ENCODE measurements at regions of chr7 and their contacts with region 1.

Region 1: DNA sequence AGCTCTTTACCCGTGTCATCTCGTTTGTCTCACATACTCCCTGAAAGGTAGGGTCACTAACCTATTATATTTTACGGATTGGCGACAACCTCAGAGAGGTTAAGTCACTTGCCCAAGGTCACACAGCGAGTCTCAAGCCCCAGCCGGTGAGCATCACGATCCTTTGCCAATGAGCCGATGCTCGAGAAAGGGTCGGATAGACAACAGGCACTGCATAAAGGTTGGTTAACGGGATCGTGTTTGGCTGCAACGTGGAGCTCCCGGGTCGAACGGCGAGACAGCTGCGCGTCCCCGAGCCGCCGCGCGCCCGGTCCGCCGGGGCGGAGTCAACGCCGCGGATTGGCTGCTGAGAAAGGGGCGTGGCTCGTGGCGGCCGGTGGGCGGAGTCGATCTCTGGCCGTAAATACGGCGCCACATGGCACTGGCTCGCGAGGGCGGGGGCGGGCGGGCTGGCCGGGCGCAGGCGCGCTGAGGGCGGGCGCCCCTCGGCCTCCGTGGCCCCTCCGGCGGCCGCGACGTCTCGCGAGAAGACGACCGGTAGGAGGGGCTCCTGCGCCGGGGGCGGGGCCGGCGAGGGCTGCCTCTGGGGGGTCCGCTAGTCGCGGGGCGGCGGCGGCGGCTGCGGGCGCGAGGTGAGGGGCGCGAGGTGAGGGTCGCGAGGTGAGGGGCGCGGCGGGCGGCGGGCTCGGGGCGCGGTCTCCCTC is at the start of gene CHST12:
- DNase-seq: peak; percentile 91 to 96 (median 93)
- ATAC-seq: peak; percentile 94
- H3K4me3 ChIP-seq: peak within 1 kb of the TSS; percentile 81
- H3K4me3 Mint-ChIP-seq: peak within 1 kb of the TSS; percentile 80 to 94 (median 89)
- H3K27ac ChIP-seq: peak within 1 kb of the TSS; percentile 70
- H3K27ac Mint-ChIP-seq: peak within 1 kb of the TSS; percentile 60 to 96 (median 84)
- H3K4me1 ChIP-seq: peaks cover 23 to 28% of the 10 kb centered on the region in 2 donors
- H3K4me1 Mint-ChIP-seq: peaks cover 38 to 54% (median 49%) of the 10 kb centered on the region in 7 donors
- H3K27me3 ChIP-seq: no peaks in the 10 kb centered on the region
- H3K27me3 Mint-ChIP-seq: peaks cover 0 to 2% (median 0%) of the 10 kb centered on the region in 5 donors
- total RNA-seq, gene CHST12: 13.3 to 41.6 (median 24.3) TPM

Region 2: GRCh38 chr7:1418505-1419309 is 984.5 kb before region 1 on chr7:
- CTCF ChIA-PET with region 1: no interaction called
- POLR2A ChIA-PET with region 1: no interaction called
- intact Hi-C with region 1: loop called in 1 of 2 experiments (anchors 5 kb)
- DNase-seq: no peak
- ATAC-seq: no peak
- H3K4me3 ChIP-seq: no peak overlapping the region
- H3K4me3 Mint-ChIP-seq: peak overlapping the region in 1 of 10 donors; percentile 37
- H3K27ac ChIP-seq: no peak overlapping the region
- H3K27ac Mint-ChIP-seq: no peak overlapping the region
- H3K4me1 ChIP-seq: peaks cover 5 to 7% of the 10 kb centered on the region in 2 donors
- H3K4me1 Mint-ChIP-seq: peaks cover 12 to 26% (median 18%) of the 10 kb centered on the region in 7 donors
- H3K27me3 ChIP-seq: no peaks in the 10 kb centered on the region
- H3K27me3 Mint-ChIP-seq: peaks cover 0 to 13% (median 12%) of the 10 kb centered on the region in 5 donors

Region 3: DNA sequence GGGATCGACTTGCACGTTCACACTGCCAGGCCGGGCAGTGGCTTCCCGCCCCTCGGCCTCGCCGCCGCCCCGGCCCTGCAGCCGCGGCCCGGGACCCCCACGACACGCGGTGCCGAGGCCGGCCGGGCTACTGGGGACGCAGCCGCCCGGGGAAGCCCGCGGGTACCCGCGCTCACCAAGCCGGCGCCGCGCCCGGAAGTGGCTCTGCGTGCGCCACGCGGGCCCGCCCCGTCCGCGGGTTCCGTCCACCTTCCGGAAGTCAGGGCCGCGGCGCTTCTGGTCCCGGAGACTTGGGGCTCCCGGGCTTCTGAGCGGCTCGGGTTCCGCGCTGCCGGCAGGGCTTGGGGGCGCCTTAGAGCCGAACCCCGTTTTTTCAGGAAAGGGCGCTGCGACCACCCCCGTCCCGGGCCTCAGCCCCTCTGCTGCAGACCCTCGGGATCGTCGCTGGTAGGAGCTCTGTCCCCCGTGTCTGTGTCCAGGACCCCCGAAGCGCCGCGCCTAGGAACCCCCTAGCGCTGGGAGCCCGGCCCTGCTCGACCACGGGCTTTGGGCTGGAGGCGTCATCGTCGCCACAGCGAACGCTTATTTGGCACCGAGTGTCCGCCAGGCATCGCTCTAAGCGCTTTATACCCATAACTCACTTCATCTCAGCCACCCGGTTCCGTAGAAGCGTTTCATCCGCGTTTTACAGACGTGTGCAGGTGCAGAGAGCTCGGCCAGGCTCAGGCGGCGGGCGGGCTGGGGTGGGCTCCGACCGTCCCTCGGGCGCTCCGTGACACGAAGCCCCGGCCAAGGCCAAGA is 833.1 kb before region 1 on chr7 and contains the start of gene PSMG3:
- CTCF ChIA-PET with region 1: no interaction called
- POLR2A ChIA-PET with region 1: interaction called, 3 read pairs
- intact Hi-C with region 1: loop called (anchors 1 to 5 kb)
- DNase-seq: peak; percentile 72 to 91 (median 84)
- ATAC-seq: peak; percentile 94
- H3K4me3 ChIP-seq: peak within 1 kb of the TSS; percentile 90
- H3K4me3 Mint-ChIP-seq: peak within 1 kb of the TSS; percentile 77 to 91 (median 86)
- H3K27ac ChIP-seq: peak within 1 kb of the TSS; percentile 95
- H3K27ac Mint-ChIP-seq: peak within 1 kb of the TSS; percentile 81 to 93 (median 88)
- H3K4me1 ChIP-seq: peaks cover 3 to 16% of the 10 kb centered on the region in 2 donors
- H3K4me1 Mint-ChIP-seq: peaks cover 14 to 36% (median 26%) of the 10 kb centered on the region in 7 donors
- H3K27me3 ChIP-seq: no peaks in the 10 kb centered on the region
- H3K27me3 Mint-ChIP-seq: no peaks in the 10 kb centered on the region
- total RNA-seq, gene PSMG3: 12.1 to 31.8 (median 23.2) TPM

Region 4: GRCh38 chr7:2232766-2233520 is 170.2 kb before region 1 on chr7 and contains the start of gene MAD1L1:
- CTCF ChIA-PET with region 1: no interaction called
- POLR2A ChIA-PET with region 1: no interaction called
- intact Hi-C with region 1: loop called (anchors 1 to 5 kb)
- DNase-seq: peak; percentile 75 to 90 (median 88)
- ATAC-seq: peak; percentile 90
- H3K4me3 ChIP-seq: peak within 1 kb of the TSS; percentile 99
- H3K4me3 Mint-ChIP-seq: peak within 1 kb of the TSS; percentile 88 to 98 (median 95)
- H3K27ac ChIP-seq: peak within 1 kb of the TSS; percentile 80
- H3K27ac Mint-ChIP-seq: peak within 1 kb of the TSS; percentile 66 to 91 (median 86)
- H3K4me1 ChIP-seq: peaks cover 13 to 27% of the 10 kb centered on the region in 2 donors
- H3K4me1 Mint-ChIP-seq: peaks cover 16 to 58% (median 31%) of the 10 kb centered on the region in 7 donors
- H3K27me3 ChIP-seq: no peaks in the 10 kb centered on the region
- H3K27me3 Mint-ChIP-seq: no peaks in the 10 kb centered on the region
- total RNA-seq, gene MAD1L1: 112 to 141 (median 125) TPM

Region 5: DNA sequence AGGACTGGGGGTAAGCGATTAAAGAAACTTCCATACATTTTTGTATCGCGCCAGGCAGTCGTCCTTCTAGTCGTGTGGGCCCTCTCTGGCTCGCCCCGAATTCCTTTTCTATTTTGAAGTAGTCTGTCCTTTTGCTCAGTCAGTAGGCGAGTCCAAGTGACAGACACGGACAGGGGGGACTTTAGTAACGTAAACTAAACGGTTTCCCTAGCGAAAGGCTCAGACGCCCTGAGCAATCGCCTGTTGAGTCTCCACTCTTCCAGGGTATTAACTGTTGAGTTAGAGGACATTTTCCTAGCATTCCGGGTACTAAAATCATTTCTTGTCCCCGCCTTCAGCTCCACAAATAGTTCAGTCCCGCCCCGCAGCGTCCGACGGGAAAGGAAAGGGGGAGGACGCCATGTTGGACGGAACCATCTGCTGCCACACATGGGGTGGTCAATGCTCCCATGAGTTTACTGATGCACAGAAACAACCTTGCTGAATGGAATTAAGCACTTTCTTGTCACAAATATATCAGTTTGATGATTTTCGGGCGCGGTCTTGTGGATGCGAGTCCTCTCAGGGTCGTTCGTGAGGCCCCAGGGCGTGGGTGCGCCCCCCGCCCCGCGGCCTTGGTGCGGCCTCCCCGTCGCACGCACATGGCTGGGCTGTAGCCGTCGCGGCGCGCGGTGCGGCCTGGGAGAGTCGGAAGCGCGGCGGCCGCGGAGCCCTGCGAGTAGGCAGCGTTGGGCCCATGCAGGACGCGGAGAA is 48.8 kb before region 1 on chr7 and contains the start of gene EIF3B:
- CTCF ChIA-PET with region 1: no interaction called
- POLR2A ChIA-PET with region 1: interaction called, 14 read pairs
- intact Hi-C with region 1: loop called (anchors 1 kb)
- DNase-seq: peak; percentile 87 to 97 (median 94)
- ATAC-seq: peak; percentile 90
- H3K4me3 ChIP-seq: peak within 1 kb of the TSS; percentile 89
- H3K4me3 Mint-ChIP-seq: peak within 1 kb of the TSS; percentile 90 to 100 (median 94)
- H3K27ac ChIP-seq: peak within 1 kb of the TSS; percentile 97
- H3K27ac Mint-ChIP-seq: peak within 1 kb of the TSS; percentile 98 to 100 (median 100)
- H3K4me1 ChIP-seq: peaks cover 25 to 38% of the 10 kb centered on the region in 2 donors
- H3K4me1 Mint-ChIP-seq: peaks cover 16 to 48% (median 31%) of the 10 kb centered on the region in 7 donors
- H3K27me3 ChIP-seq: no peaks in the 10 kb centered on the region
- H3K27me3 Mint-ChIP-seq: peaks cover 0 to 3% (median 0%) of the 10 kb centered on the region in 5 donors
- total RNA-seq, gene EIF3B: 127 to 189 (median 158) TPM

Region 6: GRCh38 chr7:2487586-2488271 is 84.6 kb after region 1 on chr7:
- CTCF ChIA-PET with region 1: no interaction called
- POLR2A ChIA-PET with region 1: no interaction called
- intact Hi-C with region 1: no loop called
- DNase-seq: no peak
- ATAC-seq: no peak
- H3K4me3 ChIP-seq: no peak overlapping the region
- H3K4me3 Mint-ChIP-seq: no peak overlapping the region
- H3K27ac ChIP-seq: no peak overlapping the region
- H3K27ac Mint-ChIP-seq: no peak overlapping the region
- H3K4me1 ChIP-seq: no peaks in the 10 kb centered on the region
- H3K4me1 Mint-ChIP-seq: peaks cover 0 to 12% (median 0%) of the 10 kb centered on the region in 7 donors
- H3K27me3 ChIP-seq: no peaks in the 10 kb centered on the region
- H3K27me3 Mint-ChIP-seq: peaks cover 0 to 8% (median 7%) of the 10 kb centered on the region in 5 donors

Region 7: GRCh38 chr7:2508327-2509215 is 105.4 kb after region 1 on chr7:
- CTCF ChIA-PET with region 1: no interaction called
- POLR2A ChIA-PET with region 1: no interaction called
- intact Hi-C with region 1: loop called in 1 of 2 experiments (anchors 5 kb)
- DNase-seq: peak; percentile 61 to 94 (median 93)
- ATAC-seq: peak; percentile 76
- H3K4me3 ChIP-seq: peak overlapping the region; percentile 61
- H3K4me3 Mint-ChIP-seq: peak overlapping the region in 9 of 10 donors; percentile 69 to 88 (median 84)
- H3K27ac ChIP-seq: peak overlapping the region; percentile 87
- H3K27ac Mint-ChIP-seq: peak overlapping the region in 7 of 9 donors; percentile 86 to 99 (median 97)
- H3K4me1 ChIP-seq: peaks cover 58 to 61% of the 10 kb centered on the region in 2 donors
- H3K4me1 Mint-ChIP-seq: peaks cover 36 to 69% (median 50%) of the 10 kb centered on the region in 7 donors
- H3K27me3 ChIP-seq: no peaks in the 10 kb centered on the region
- H3K27me3 Mint-ChIP-seq: no peaks in the 10 kb centered on the region

Region 8: GRCh38 chr7:2519119-2519930 is 116.2 kb after region 1 on chr7 and contains the start of gene LFNG:
- CTCF ChIA-PET with region 1: no interaction called
- POLR2A ChIA-PET with region 1: interaction called, 3 read pairs
- intact Hi-C with region 1: loop called in 1 of 2 experiments (anchors 5 kb)
- DNase-seq: peak; percentile 64 to 93 (median 77)
- ATAC-seq: peak; percentile 89
- H3K4me3 ChIP-seq: peak within 1 kb of the TSS; percentile 94
- H3K4me3 Mint-ChIP-seq: peak within 1 kb of the TSS; percentile 94 to 99 (median 96)
- H3K27ac ChIP-seq: peak within 1 kb of the TSS; percentile 78
- H3K27ac Mint-ChIP-seq: peak within 1 kb of the TSS; percentile 80 to 92 (median 88)
- H3K4me1 ChIP-seq: peaks cover 20 to 25% of the 10 kb centered on the region in 2 donors
- H3K4me1 Mint-ChIP-seq: peaks cover 14 to 33% (median 30%) of the 10 kb centered on the region in 7 donors
- H3K27me3 ChIP-seq: no peaks in the 10 kb centered on the region
- H3K27me3 Mint-ChIP-seq: peaks cover 0 to 11% (median 0%) of the 10 kb centered on the region in 5 donors
- total RNA-seq, gene LFNG: 114 to 246 (median 151) TPM

Measured in naive thymus-derived CD4-positive, alpha-beta T cell (primary cell).